Right ventricle myocardium inferior (tissue), 1 donor: ENCODE measurements at regions of chr12 and their contacts with region 1.

Region 1: DNA sequence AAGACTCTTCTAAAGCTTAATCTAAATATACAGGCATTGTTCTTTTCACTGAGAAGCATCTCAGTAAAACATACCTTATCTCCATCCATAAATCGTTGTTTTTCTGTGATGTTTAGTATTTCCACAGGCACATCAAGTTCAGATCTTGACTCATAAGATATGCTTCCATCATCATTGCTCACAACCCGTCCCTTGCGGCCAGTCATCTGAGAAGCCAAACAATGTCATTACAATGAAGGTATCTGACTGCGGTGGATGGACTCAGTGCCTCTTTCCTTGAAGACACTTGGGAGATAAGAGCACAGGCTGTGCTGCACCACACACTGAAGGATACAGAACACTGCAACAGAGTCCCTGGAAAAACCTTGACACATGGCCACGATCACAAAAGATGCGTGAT is 44.8 kb downstream of the SBNO1 start:
- DNase-seq: no peak
- ATAC-seq: no peak

Region 2: GRCh38 chr12:123223241-123223668 is 96.6 kb before region 1 on chr12:
- intact Hi-C with region 1: loop called (anchors 10 kb)
- DNase-seq: no peak
- ATAC-seq: no peak

Region 3: DNA sequence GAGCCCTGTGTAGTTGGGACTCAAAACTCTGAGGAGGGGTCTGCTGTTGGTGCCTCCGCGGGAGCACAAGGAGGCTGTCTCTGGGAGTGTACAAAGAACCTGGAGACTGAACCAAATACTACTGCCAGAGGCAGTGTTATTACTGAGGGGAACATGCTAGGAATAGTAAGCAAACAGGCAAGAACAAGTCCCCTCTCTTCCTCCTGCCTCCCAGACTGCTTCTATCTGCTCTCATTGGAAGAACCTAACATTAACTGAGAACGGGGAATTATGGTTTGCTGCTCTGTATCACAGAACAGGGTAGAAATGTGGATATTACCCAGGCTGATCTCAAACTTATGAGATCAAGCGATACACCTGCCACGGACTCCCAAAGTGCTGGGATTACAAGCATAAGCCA is 59.6 kb after region 1 on chr12:
- intact Hi-C with region 1: no loop called
- DNase-seq: no peak
- ATAC-seq: no peak

Region 4: GRCh38 chr12:123410041-123410412 is 90.2 kb after region 1 on chr12:
- intact Hi-C with region 1: no loop called
- DNase-seq: no peak
- ATAC-seq: no peak